CD4-positive, alpha-beta memory T cell (primary cell): ENCODE measurements at regions of chr7 and their contacts with region 1.

Region 1: DNA sequence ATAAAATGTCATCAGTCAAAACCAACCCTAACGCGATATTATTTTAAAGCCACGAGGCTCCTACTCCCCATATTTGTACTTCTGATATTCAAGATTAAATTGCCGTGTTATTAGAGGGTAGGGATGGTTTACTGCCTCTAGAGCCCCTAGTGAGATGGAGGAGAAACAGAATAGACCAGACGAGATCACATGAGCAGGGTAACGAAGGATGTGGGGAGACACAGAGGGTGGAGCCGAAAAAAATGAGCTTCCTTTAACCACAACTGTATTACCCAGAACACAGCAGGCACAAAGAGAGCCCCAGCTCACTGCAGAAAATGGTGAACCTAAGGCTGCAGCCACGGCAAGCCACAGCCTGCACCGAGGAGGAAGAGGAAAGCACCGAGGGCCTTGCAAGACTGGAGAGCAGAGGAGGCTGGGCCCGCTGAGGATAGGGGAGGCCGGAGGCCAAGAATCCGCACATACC is 14.3 kb downstream of the ZC3HAV1 start:
- DNase-seq: peak; percentile 91 to 96 (median 94)
- H3K4me3 ChIP-seq: peak overlapping the region; percentile 34 to 39
- H3K4me3 Mint-ChIP-seq: peak overlapping the region; percentile 78 to 93 (median 88)
- H3K27ac ChIP-seq: peak overlapping the region; percentile 61
- H3K27ac Mint-ChIP-seq: peak overlapping the region; percentile 88 to 97 (median 93)
- H3K4me1 ChIP-seq: peaks cover 90% of the 10 kb centered on the region
- H3K4me1 Mint-ChIP-seq: peaks cover 62 to 94% (median 78%) of the 10 kb centered on the region in 4 donors
- H3K27me3 ChIP-seq: no peaks in the 10 kb centered on the region
- H3K27me3 Mint-ChIP-seq: no peaks in the 10 kb centered on the region

Region 2: DNA sequence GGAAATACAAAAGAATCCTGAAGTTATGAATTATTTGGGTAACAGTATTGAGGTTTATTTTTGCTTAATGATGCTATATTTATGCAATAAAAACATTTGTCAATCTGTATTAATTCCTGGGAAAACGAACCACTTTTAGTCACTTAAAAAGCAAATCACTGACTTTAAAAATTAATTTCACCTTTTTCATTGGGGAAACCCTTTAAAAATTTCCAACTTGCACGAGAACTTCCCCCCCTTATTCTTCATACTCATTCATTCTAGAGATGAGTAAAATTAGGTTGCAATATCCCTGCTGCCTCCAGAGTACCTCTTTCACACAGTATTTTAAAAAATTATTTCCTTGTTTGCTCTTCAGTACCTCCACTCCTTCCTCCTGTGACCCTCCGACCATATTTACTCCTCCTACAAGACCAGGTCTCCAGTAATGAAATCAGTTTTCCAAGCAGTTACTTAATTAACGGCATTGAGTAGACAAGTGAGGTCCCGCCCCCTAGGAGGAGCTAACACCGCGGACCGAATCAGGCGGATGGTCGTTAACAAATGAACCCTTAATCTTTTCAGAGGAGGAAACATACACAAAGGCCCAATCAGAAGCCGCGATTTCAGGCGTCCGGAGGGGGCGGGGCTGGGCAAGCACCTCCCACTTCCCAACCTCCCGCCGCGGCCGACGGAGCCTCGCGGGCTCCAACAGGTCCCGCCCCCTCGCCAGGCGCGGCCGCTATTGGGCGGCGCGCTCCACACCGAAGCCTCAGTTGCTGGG is 635.6 kb before region 1 on chr7:
- CTCF ChIA-PET with region 1: no interaction called
- POLR2A ChIA-PET with region 1: no interaction called
- intact Hi-C with region 1: loop called (anchors 10 kb)
- DNase-seq: peak; percentile 98 to 99 (median 98)
- H3K4me3 ChIP-seq: peak overlapping the region in 1 of 2 donors; percentile 49
- H3K4me3 Mint-ChIP-seq: peak overlapping the region; percentile 73 to 94 (median 84)
- H3K27ac ChIP-seq: peak overlapping the region; percentile 2
- H3K27ac Mint-ChIP-seq: peak overlapping the region; percentile 58 to 95 (median 85)
- H3K4me1 ChIP-seq: peaks cover 15% of the 10 kb centered on the region
- H3K4me1 Mint-ChIP-seq: peaks cover 15 to 30% (median 23%) of the 10 kb centered on the region in 4 donors
- H3K27me3 ChIP-seq: no peaks in the 10 kb centered on the region
- H3K27me3 Mint-ChIP-seq: peaks cover 0 to 3% of the 10 kb centered on the region in 2 donors

Region 3: DNA sequence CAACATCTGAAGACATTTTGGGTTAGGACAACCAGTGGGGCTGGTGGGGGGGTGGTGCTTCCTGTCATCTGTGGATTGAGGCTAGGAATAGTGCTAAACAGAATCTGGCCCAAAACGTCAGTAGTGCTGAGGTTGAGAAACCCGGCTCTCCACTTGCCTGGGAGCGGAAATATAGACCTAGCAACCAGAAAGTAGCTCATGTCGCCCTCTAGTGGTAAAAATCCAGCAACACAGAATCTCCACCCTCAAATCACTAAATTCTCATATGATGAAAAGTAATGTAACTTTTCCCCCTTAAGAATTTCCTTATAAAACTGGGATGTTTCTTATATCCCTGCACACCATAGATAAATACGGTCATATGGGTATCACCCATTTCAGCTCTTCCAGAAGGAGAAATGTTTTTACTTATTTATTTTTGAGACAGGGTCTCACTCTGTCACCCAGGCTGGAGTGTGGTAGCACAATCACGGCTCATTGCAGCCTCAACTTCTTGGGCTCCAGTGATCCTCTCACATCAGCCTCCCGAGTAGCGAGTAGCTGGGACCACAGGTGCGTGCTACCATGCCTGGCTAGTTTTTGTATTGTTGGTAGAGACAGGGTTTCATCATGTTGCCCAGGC is 20.1 kb before region 1 on chr7:
- CTCF ChIA-PET with region 1: interaction called, 35 read pairs
- POLR2A ChIA-PET with region 1: interaction called, 244 read pairs
- intact Hi-C with region 1: loop called (anchors 1 kb)
- DNase-seq: peak; percentile 77 to 84 (median 80)
- H3K4me3 ChIP-seq: no peak overlapping the region
- H3K4me3 Mint-ChIP-seq: peak overlapping the region; percentile 53 to 75 (median 58)
- H3K27ac ChIP-seq: peak overlapping the region; percentile 27
- H3K27ac Mint-ChIP-seq: peak overlapping the region; percentile 86 to 91 (median 88)
- H3K4me1 ChIP-seq: peaks cover 61% of the 10 kb centered on the region
- H3K4me1 Mint-ChIP-seq: peaks cover 38 to 82% (median 59%) of the 10 kb centered on the region in 4 donors
- H3K27me3 ChIP-seq: no peaks in the 10 kb centered on the region
- H3K27me3 Mint-ChIP-seq: no peaks in the 10 kb centered on the region

Region 4: DNA sequence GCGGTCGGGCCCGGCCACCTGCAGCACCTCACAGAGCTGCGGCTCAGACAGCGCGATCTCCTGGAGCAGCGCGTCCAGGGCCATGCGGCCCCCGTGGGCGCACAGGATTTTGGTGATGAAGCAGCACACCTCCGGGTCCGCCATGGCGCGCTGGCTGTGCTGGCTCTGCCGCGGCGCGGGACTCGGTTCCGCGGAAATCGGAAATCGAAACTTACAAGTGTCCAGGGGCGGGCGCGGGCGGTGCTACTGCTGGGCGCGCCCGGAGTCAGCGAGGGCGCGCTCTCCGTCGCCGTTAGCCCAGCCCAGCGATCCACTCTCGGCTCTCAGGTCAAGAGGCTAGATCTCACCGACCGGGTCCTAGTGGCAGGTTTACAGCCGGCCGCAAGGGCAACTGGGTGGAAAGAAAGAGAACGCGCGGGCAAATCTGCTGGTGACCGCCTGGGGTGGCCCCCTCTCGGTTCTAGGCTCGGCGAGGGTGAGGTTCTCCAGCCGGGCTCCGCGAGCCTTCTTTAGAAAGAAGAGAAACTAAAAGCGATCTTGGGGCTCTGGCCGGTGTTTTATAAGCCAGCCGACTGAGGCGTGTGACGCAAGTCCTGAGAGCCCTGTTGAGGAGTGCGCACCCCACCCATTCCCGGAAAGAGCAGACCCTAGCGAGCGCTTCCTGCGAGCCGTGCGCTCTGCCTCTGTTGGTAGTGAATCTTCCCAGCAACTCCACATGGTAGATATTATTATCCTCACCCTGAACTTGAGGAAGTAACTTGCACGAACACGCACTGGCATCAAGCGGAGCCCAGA is 14.2 kb after region 1 on chr7 and contains the start of gene ZC3HAV1:
- CTCF ChIA-PET with region 1: interaction called, 70 read pairs
- POLR2A ChIA-PET with region 1: interaction called, 248 read pairs
- intact Hi-C with region 1: loop called (anchors 1 kb)
- DNase-seq: peak; percentile 89 to 94 (median 93)
- H3K4me3 ChIP-seq: peak within 1 kb of the TSS; percentile 90 to 96
- H3K4me3 Mint-ChIP-seq: peak within 1 kb of the TSS; percentile 95 to 99 (median 97)
- H3K27ac ChIP-seq: peak within 1 kb of the TSS; percentile 96
- H3K27ac Mint-ChIP-seq: peak within 1 kb of the TSS; percentile 88 to 100 (median 99)
- H3K4me1 ChIP-seq: peaks cover 29% of the 10 kb centered on the region
- H3K4me1 Mint-ChIP-seq: peaks cover 28 to 59% (median 38%) of the 10 kb centered on the region in 4 donors
- H3K27me3 ChIP-seq: no peaks in the 10 kb centered on the region
- H3K27me3 Mint-ChIP-seq: no peaks in the 10 kb centered on the region
- total RNA-seq, gene ZC3HAV1: 154 to 159 TPM

Region 5: DNA sequence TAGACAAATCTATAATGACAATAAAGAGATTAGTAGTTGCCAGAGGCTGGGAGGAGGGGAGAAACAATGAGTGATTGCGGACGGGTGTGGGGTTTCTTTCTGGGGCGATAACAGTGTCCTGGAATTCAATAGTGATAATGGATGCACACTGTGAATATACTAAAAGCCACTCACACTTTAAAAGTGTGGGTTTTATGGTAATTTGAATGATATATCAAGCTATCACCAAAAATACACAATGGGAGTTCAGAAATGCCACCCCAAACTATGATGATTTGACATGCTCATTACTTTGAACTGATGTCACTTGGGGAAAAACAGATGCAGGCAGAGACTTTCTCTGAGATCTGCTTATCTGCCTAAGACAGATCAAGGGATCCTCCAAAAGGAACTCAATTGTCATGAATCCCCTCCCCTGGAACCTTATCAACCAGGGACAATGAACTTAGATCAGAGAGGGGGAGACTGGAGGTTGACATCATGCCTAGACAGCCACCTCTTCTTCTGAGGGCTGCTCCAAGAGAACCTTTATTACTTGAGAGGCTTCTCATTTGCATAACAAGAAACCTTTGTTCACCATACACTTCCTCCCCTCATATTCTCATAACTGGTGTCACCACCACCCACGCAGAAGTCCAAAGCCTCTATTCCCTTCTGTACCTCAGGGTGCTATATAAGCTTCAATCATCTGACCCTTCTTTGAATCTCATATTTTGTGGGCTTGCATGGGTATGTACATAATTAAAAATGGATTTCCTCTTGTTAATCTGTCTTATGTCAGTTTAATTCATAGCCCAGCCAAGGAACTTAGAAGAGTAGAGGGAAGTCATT is 29.1 kb after region 1 on chr7:
- CTCF ChIA-PET with region 1: interaction called, 11 read pairs
- POLR2A ChIA-PET with region 1: interaction called, 30 read pairs
- intact Hi-C with region 1: no loop called
- DNase-seq: no peak
- H3K4me3 ChIP-seq: no peak overlapping the region
- H3K4me3 Mint-ChIP-seq: peak overlapping the region in 1 of 8 donors; percentile 40
- H3K27ac ChIP-seq: no peak overlapping the region
- H3K27ac Mint-ChIP-seq: no peak overlapping the region
- H3K4me1 ChIP-seq: peaks cover 12% of the 10 kb centered on the region
- H3K4me1 Mint-ChIP-seq: peaks cover 7 to 31% (median 12%) of the 10 kb centered on the region in 4 donors
- H3K27me3 ChIP-seq: no peaks in the 10 kb centered on the region
- H3K27me3 Mint-ChIP-seq: no peaks in the 10 kb centered on the region

Region 6: GRCh38 chr7:139230774-139231512 is 135.7 kb after region 1 on chr7 and contains the start of gene UBN2:
- CTCF ChIA-PET with region 1: no interaction called
- POLR2A ChIA-PET with region 1: interaction called, 11 read pairs
- intact Hi-C with region 1: no loop called
- DNase-seq: peak; percentile 79 to 90 (median 80)
- H3K4me3 ChIP-seq: peak within 1 kb of the TSS; percentile 79 to 96
- H3K4me3 Mint-ChIP-seq: peak within 1 kb of the TSS; percentile 98 to 100 (median 100)
- H3K27ac ChIP-seq: peak within 1 kb of the TSS; percentile 74
- H3K27ac Mint-ChIP-seq: peak within 1 kb of the TSS; percentile 96 to 100 (median 98)
- H3K4me1 ChIP-seq: peaks cover 19% of the 10 kb centered on the region
- H3K4me1 Mint-ChIP-seq: peaks cover 10 to 36% (median 24%) of the 10 kb centered on the region in 4 donors
- H3K27me3 ChIP-seq: no peaks in the 10 kb centered on the region
- H3K27me3 Mint-ChIP-seq: no peaks in the 10 kb centered on the region
- total RNA-seq, gene UBN2: 23.6 to 26.7 TPM